AG04449 (cell line): ENCODE measurements at regions of chr9 and their contacts with region 1.

Region 1: DNA sequence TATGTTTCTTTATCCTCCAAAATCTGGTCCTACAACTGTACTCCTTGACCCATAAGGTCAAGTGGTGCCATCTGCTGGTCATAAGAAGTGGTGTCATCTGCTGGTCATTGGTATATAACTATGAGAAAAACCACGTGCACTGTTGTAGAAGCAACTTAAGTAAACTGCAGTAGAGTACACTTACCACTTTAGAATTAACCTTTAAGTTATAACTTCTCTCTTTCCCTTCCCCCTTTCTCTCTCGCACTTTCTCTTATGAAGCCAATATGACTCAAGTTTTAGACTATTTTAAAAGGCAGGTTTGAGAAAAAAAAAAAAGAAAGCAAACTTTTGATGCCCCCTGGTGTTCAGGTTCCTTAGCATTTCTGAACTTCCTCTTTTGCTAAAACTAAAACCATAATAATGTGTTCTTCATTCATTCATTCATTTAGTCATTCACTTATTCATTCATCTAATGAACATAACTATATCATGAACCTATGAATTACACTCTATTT is 12.8 kb upstream of the MTAP start:
- DNase-seq: no peak
- H3K4me3 ChIP-seq: peak overlapping the region; percentile 48
- CTCF ChIP-seq: peak; percentile 61

Region 2: GRCh38 chr9:21210311-21210710 is 579.3 kb before region 1 on chr9:
- CTCF ChIA-PET with region 1: no interaction called
- POLR2A ChIA-PET with region 1: no interaction called
- DNase-seq: no peak
- H3K4me3 ChIP-seq: no peak overlapping the region
- CTCF ChIP-seq: no peak

Region 3: GRCh38 chr9:21317956-21318923 is 471.3 kb before region 1 on chr9:
- CTCF ChIA-PET with region 1: interaction called, 12 read pairs
- POLR2A ChIA-PET with region 1: no interaction called
- DNase-seq: no peak
- H3K4me3 ChIP-seq: no peak overlapping the region
- CTCF ChIP-seq: peak; percentile 71

Region 4: DNA sequence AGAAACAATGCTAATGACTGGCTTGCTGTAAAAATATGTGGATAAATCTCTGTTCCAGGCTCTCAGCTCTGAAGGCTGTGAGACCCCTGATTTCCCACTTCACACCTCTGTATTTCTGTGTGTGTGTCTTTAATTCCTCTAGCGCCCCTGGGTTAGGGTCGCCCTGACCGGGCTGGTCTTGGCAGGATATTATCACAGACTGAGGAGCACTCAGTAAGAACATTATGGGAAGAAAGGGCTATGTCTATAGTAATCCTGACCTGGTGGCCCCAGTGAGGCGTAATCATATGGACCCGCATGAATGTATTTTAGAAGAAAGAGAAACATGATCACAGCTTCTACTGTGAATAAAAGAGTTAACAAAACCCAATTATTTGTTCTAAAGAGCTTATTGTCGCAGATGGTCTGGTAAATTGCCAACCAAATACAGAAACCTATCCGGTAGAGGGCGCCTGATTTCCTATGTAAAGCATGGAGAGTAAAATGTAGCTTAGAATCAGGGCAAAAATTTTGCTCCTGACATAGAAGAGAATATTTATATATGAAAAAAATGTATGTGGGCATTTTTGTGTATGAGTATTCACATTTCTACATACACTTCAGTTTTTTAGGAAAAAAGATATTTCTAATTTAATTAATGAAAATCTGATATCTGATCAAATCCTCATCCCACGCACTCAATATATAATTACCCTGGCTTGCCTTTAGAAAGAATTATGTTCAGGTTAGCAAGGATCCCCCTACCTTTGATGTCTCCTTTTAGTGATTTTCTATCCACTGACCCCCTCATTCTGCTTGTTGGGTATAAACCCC is 355.2 kb before region 1 on chr9:
- CTCF ChIA-PET with region 1: interaction called, 29 read pairs
- POLR2A ChIA-PET with region 1: no interaction called
- DNase-seq: peak; percentile 23
- H3K4me3 ChIP-seq: no peak overlapping the region
- CTCF ChIP-seq: peak; percentile 53

Region 5: DNA sequence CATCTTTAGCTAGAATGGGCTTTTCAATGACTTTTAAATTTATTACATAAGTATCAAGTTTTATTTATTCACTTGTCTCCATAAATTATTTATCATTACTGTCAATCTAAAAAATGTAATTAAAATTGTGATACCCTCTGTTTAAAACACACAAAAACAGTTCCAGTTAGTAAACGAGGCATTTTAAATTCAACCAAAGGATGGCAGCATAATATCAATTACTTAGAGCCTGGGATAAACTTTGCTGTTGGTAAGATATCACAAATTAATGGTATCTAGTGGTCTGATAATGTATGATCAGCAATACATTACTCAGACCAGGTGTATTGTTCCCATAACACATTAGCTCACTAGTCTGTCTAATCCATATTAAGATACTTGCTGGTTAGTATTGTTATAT is 297.8 kb before region 1 on chr9:
- CTCF ChIA-PET with region 1: interaction called, 36 read pairs
- POLR2A ChIA-PET with region 1: no interaction called
- DNase-seq: no peak
- H3K4me3 ChIP-seq: no peak overlapping the region
- CTCF ChIP-seq: no peak

Region 6: DNA sequence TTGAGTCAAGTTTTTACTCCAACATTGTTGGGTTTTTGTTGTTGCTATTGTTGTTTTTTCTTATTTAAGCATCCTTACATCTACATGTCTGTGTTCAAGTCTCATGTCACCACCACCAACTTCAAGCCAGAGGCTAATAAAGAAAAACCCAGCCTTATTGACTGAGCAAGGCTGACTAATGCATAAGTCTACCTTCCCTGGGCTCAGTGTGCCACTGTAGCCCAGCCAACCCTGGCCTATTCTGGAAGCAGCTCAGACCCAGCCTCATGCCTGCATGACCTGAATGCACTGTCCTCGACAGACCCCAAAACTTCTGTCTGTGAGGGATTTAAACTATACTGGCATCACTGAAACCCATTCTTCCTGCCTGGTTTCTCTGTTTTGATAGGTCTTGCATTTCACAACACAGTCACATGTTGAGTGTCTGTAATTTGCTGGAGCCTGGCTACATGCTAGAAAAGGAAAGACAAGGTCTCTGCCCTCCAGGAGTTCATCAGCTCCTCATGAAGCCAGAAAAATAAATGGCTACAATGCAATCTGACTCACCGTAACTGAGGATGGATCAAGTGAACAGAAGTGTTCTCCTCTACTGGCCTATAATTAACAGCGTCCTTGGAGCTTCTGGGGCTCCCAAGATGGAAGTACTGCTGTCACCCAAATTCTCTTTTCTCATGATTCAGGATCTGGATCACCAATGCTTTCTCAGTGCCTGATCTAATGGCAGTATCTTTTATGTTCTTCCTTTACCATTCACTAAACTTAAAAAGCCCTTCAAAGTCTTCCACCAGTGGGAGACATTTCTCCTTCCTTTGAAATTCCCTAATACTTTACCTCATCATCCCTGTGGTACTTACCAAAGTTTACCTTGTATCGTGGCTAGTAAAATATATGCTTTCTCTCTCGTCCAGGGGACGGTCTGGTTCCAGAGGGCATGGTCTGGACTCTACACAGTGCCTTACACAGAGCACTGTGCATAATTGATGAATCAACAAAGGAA is 203.5 kb before region 1 on chr9:
- CTCF ChIA-PET with region 1: interaction called, 13 read pairs
- POLR2A ChIA-PET with region 1: no interaction called
- DNase-seq: no peak
- H3K4me3 ChIP-seq: no peak overlapping the region
- CTCF ChIP-seq: peak; percentile 11

Region 7: GRCh38 chr9:21709464-21710058 is 80.0 kb before region 1 on chr9:
- CTCF ChIA-PET with region 1: interaction called, 24 read pairs
- POLR2A ChIA-PET with region 1: no interaction called
- DNase-seq: no peak
- H3K4me3 ChIP-seq: no peak overlapping the region
- CTCF ChIP-seq: peak; percentile 60

Region 8: DNA sequence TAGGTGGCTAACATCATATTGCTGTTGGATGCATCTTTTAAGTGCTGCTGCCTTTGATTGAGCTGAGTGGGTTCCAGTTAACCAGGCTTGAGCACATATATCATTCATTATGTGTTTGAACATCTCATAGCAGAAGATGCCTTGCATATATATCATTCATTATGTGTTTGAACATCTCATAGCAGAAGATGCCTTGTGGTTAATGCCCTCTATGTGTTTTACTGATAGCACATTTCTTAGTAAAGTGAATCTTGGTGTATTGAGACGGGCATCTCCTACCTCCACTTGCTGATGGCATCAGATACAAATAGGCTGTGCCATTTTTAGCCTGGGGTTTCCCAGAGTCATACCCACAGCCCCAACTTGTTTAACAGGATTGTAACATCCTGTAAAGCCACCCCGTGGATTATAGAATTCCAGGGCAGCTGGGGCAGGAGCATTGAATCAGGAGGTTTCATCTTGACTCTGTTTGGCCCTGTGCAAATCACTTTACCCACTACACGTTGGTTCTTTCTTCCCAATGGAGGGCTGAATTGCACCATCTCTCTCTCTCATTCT is 39.3 kb after region 1 on chr9:
- CTCF ChIA-PET with region 1: no interaction called
- POLR2A ChIA-PET with region 1: no interaction called
- DNase-seq: no peak
- H3K4me3 ChIP-seq: no peak overlapping the region
- CTCF ChIP-seq: no peak